ENCODE measurements at regions of chr14 and their contacts with region 1.

Region 1: GRCh38 chr14:92540472-92541053 is 27.0 kb downstream of the RIN3 start:
- DNase-seq: peak; percentile 89 to 94
- ATAC-seq: peak; percentile 93 to 97 (median 96)
- H3K4me3 ChIP-seq: peak overlapping the region in 3 of 10 donors; percentile 1 to 14 (median 13)
- H3K27ac ChIP-seq: peak overlapping the region; percentile 82 to 94 (median 86)
- H3K4me1 ChIP-seq: peaks cover 9 to 51% (median 41%) of the 10 kb centered on the region in 9 donors
- H3K27me3 ChIP-seq: no peaks in the 10 kb centered on the region
- CTCF ChIP-seq: no peak

Region 2: GRCh38 chr14:92340931-92341330 is 199.6 kb before region 1 on chr14:
- intact Hi-C with region 1: no loop called
- DNase-seq: no peak
- ATAC-seq: no peak
- H3K4me3 ChIP-seq: no peak overlapping the region
- H3K27ac ChIP-seq: no peak overlapping the region
- H3K4me1 ChIP-seq: no peaks in the 10 kb centered on the region
- H3K27me3 ChIP-seq: peaks cover 0 to 26% (median 10%) of the 10 kb centered on the region in 7 donors
- CTCF ChIP-seq: no peak

Region 3: GRCh38 chr14:92513204-92513973 is 27.2 kb before region 1 on chr14 and contains the start of gene RIN3:
- intact Hi-C with region 1: loop called in 1 of 10 experiments (anchors 2 kb)
- DNase-seq: peak; percentile 66 to 67
- ATAC-seq: peak; percentile 62 to 85 (median 75)
- H3K4me3 ChIP-seq: peak within 1 kb of the TSS; percentile 54 to 97 (median 80)
- H3K27ac ChIP-seq: peak within 1 kb of the TSS; percentile 64 to 98 (median 93)
- H3K4me1 ChIP-seq: peaks cover 0 to 66% (median 39%) of the 10 kb centered on the region in 9 donors
- H3K27me3 ChIP-seq: peaks cover 0 to 4% (median 0%) of the 10 kb centered on the region in 7 donors
- CTCF ChIP-seq: no peak
- total RNA-seq, gene RIN3: 9.4 to 24.0 (median 12.7) TPM

Region 4: GRCh38 chr14:92551044-92551841 is 10.7 kb after region 1 on chr14:
- intact Hi-C with region 1: loop called in 1 of 10 experiments (anchors 1 kb)
- DNase-seq: no peak
- ATAC-seq: no peak
- H3K4me3 ChIP-seq: no peak overlapping the region
- H3K27ac ChIP-seq: peak overlapping the region in 1 of 10 donors; percentile 89
- H3K4me1 ChIP-seq: peaks cover 5 to 71% (median 30%) of the 10 kb centered on the region in 9 donors
- H3K27me3 ChIP-seq: no peaks in the 10 kb centered on the region
- CTCF ChIP-seq: no peak

Region 5: GRCh38 chr14:92564319-92565019 is 23.9 kb after region 1 on chr14:
- intact Hi-C with region 1: loop called in 1 of 10 experiments (anchors 1 kb)
- DNase-seq: peak in 1 of 2 donors; percentile 43
- ATAC-seq: peak in 4 of 8 donors; percentile 32 to 50 (median 45)
- H3K4me3 ChIP-seq: no peak overlapping the region
- H3K27ac ChIP-seq: peak overlapping the region in 2 of 10 donors; percentile 31 to 79
- H3K4me1 ChIP-seq: peaks cover 0 to 57% (median 11%) of the 10 kb centered on the region in 9 donors
- H3K27me3 ChIP-seq: no peaks in the 10 kb centered on the region
- CTCF ChIP-seq: no peak

Measured in heart right ventricle (tissue), 16 donors.